ENCODE measurements at regions of chr9 and their contacts with region 1.

Region 1: GRCh38 chr9:96854073-96854876 is at the start of gene ZNF782:
- DNase-seq: peak; percentile 98
- H3K4me3 ChIP-seq: peak within 1 kb of the TSS; percentile 91
- H3K27ac ChIP-seq: no peak within 1 kb of the TSS
- H3K4me1 ChIP-seq: peaks cover 21% of the 10 kb centered on the region
- H3K27me3 ChIP-seq: no peaks in the 10 kb centered on the region
- total RNA-seq, gene ZNF782: 2.9 and 4.8 TPM in 2 replicates

Region 2: DNA sequence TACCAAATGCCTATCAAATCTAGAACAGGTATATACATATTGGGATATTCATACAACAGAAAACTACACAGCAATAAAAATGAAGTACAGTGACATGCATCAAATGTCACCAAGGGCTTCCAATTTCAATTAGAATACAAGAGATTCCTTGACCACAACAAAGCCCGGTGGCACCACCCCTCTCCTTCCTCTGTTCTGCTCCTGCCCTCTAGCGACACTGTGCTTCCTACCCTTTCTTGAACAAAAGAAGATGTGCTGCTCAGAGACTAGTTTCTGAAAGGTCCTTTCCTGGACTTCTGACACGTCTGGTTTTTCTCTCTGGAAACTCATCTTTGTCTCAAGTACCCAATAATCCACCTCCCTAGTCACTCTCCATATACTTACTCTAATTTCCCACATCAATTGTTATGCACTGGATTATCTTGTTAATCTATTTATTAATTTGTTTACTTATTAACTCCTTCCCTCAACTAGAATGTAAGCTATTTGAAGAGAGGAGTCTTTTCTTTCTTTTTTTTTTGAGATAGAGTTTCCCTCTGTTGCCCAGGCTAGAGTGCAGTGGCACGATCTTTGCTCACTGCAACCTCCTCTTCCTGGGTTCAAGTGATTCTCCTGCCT is 255.0 kb after region 1 on chr9:
- in situ Hi-C with region 1: loop called (anchors 25 kb)
- DNase-seq: peak; percentile 41
- H3K4me3 ChIP-seq: no peak overlapping the region
- H3K27ac ChIP-seq: no peak overlapping the region
- H3K4me1 ChIP-seq: no peaks in the 10 kb centered on the region
- H3K27me3 ChIP-seq: peaks cover 9% of the 10 kb centered on the region; the same call in 1 of the 2 replicates

Region 3: DNA sequence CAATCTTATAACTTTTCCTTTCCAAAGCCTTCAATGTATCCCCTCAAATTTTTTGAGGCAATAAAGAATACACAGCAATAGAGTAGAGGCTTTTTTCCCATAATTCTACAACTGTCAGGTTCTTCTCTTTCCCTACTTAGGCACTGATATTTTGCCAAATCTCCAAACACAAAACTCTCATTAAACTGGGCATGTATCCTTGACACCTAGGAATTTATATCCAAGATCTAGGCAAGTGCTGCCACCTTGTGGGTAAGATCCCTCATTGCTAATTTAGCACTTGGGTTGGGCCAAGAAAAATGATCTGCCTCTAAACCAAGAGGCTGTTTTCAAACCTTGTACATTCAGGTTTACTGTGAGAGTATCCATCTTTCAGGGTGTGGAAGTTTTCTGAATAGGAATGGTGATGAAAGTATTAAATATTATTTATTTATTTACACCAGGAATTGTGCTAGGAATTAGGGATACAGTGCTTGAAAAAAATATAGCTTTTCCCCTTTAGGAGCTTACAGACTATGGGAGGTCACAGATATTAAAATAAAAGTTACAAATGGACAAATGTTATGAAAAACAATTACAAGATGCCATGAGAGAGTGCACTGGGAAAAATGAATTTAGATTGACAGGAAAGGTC is 761.3 kb after region 1 on chr9:
- in situ Hi-C with region 1: loop called (anchors 25 kb)
- DNase-seq: peak; percentile 70
- H3K4me3 ChIP-seq: no peak overlapping the region
- H3K27ac ChIP-seq: no peak overlapping the region
- H3K4me1 ChIP-seq: no peaks in the 10 kb centered on the region
- H3K27me3 ChIP-seq: no peaks in the 10 kb centered on the region

Measured in GM23248 (cell line).